Vagina (tissue), 2 donors: ENCODE measurements at regions of chr10 and their contacts with region 1.

Region 1: GRCh38 chr10:102835007-102835482 is 2.2 kb downstream of the CYP17A1 start:
- DNase-seq: peak in 1 of 2 donors; percentile 84
- H3K4me3 ChIP-seq: no peak overlapping the region
- H3K27ac ChIP-seq: no peak overlapping the region
- H3K4me1 ChIP-seq: no peaks in the 10 kb centered on the region
- H3K27me3 ChIP-seq: no peaks in the 10 kb centered on the region
- CTCF ChIP-seq: peak; percentile 68 to 83 (median 76)
- POLR2A ChIP-seq: no peak

Region 2: GRCh38 chr10:102904346-102904745 is 69.3 kb after region 1 on chr10:
- intact Hi-C with region 1: loop called (anchors 5 kb)
- DNase-seq: no peak
- H3K4me3 ChIP-seq: no peak overlapping the region
- H3K27ac ChIP-seq: no peak overlapping the region
- H3K4me1 ChIP-seq: no peaks in the 10 kb centered on the region
- H3K27me3 ChIP-seq: no peaks in the 10 kb centered on the region
- CTCF ChIP-seq: no peak
- POLR2A ChIP-seq: no peak

Region 3: DNA sequence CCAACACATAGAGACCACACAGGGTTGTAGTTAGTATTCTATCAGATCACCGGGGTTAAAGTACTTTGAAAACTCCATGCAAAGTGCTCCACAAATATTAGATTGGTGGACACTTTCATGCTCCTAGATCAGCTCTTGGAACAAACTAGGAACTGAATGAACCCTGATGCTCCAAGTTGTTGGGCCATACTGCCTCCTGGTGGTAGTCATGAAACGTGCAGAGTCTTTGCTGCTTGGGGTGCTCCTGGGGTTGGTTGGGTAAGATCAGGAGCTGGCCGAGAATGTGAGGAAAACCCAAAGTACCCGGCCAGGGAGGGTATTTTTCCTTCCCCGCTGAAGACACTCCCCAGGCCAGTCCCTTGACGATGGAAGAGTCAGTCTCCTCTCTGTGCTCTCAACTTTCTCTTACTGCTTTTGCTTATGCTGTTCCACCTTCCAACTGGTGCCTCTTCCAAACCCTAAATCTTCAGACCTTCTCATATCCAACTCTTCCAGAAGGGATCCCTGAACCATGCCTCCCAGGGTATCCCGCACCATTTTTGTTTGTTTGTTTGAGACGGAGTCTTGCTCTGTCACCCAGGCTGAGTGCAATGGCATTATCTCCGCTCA is 409.7 kb after region 1 on chr10:
- intact Hi-C with region 1: loop called (anchors 10 kb)
- DNase-seq: no peak
- H3K4me3 ChIP-seq: no peak overlapping the region
- H3K27ac ChIP-seq: no peak overlapping the region
- H3K4me1 ChIP-seq: no peaks in the 10 kb centered on the region
- H3K27me3 ChIP-seq: no peaks in the 10 kb centered on the region
- CTCF ChIP-seq: peak; percentile 73 to 95 (median 83)
- POLR2A ChIP-seq: no peak